ENCODE measurements at regions of chr2 and their contacts with region 1.

Region 1: DNA sequence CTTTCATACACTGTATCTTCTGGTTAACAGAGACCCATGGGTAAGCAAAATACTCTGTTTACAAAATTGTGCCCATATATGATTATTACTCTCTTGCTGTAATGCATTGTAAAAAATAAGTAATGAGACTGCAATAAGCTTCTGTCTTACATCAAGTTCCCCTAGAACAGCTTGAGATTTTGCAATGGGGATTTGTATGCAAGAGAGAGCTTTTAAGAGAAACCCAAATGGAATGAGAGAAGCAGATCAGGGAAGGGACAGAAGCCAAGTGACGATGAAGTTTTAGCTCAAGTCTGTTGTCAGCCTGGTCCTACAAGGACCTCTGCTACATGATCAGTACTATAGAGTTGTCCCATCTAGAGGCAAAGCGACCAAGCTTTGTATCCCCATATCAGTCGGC is 218.1 kb upstream of the VWC2L start:
- DNase-seq: no peak
- H3K4me3 Mint-ChIP-seq: no peak overlapping the region
- H3K27ac Mint-ChIP-seq: no peak overlapping the region
- H3K4me1 Mint-ChIP-seq: no peaks in the 10 kb centered on the region
- H3K27me3 Mint-ChIP-seq: no peaks in the 10 kb centered on the region
- CTCF ChIP-seq: no peak

Region 2: GRCh38 chr2:214226061-214226460 is 33.4 kb after region 1 on chr2:
- CTCF ChIA-PET with region 1: no interaction called
- intact Hi-C with region 1: loop called (anchors 2 kb)
- DNase-seq: no peak
- H3K4me3 Mint-ChIP-seq: no peak overlapping the region
- H3K27ac Mint-ChIP-seq: no peak overlapping the region
- H3K4me1 Mint-ChIP-seq: peaks cover 8% of the 10 kb centered on the region
- H3K27me3 Mint-ChIP-seq: no peaks in the 10 kb centered on the region
- CTCF ChIP-seq: no peak

Region 3: DNA sequence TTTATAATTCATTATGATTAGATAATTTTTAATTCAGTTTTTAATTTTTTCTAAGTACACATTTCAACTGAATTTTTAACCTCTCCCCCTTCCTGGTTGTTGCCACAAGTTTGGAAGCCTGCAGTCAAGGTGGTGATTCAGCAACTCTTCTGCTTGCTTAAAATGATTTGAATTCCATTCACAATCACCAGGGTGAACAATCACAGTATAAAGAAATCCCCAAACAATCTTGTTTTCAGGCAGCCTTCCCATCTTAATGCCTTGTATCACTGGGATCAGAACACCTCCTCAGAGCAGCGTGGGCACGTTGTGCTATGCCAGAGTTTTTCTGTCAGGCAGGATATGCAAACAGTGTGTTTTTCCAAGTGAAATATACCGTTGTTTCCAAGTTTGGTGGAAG is 663.4 kb after region 1 on chr2:
- CTCF ChIA-PET with region 1: no interaction called
- intact Hi-C with region 1: no loop called
- DNase-seq: no peak
- H3K4me3 Mint-ChIP-seq: no peak overlapping the region
- H3K27ac Mint-ChIP-seq: no peak overlapping the region
- H3K4me1 Mint-ChIP-seq: no peaks in the 10 kb centered on the region
- H3K27me3 Mint-ChIP-seq: no peaks in the 10 kb centered on the region
- CTCF ChIP-seq: no peak